Naive thymus-derived CD4-positive, alpha-beta T cell (primary cell): ENCODE measurements at regions of chr12 and their contacts with region 1.

Region 1: GRCh38 chr12:21476949-21477348 is 24.5 kb downstream of the RECQL start:
- DNase-seq: no peak
- ATAC-seq: no peak
- H3K4me3 ChIP-seq: no peak overlapping the region
- H3K4me3 Mint-ChIP-seq: no peak overlapping the region
- H3K27ac ChIP-seq: no peak overlapping the region
- H3K27ac Mint-ChIP-seq: peak overlapping the region in 3 of 9 donors; percentile 39 to 73 (median 46)
- H3K4me1 ChIP-seq: no peaks in the 10 kb centered on the region
- H3K4me1 Mint-ChIP-seq: peaks cover 0 to 15% (median 0%) of the 10 kb centered on the region in 7 donors
- H3K27me3 ChIP-seq: no peaks in the 10 kb centered on the region
- H3K27me3 Mint-ChIP-seq: no peaks in the 10 kb centered on the region

Region 2: DNA sequence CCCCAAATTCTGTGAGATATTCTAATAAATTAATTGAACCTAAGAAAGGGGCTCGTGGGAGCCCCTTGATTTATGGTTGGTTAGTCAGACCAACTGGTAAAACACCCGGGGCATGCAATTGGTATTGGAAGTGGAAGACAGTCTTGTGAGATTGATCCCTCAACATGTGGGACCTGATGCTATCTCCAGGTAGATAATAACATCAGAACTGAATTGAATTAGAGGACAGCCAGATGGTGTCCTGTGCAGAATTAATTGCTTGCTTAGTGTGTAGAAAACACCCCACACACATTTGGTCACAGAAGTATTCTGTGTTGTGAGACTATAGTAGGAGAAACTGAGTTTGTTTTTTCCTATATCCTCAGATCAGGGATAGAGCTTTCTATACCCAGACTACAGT is 17.5 kb before region 1 on chr12:
- CTCF ChIA-PET with region 1: no interaction called
- POLR2A ChIA-PET with region 1: no interaction called
- intact Hi-C with region 1: loop called in 1 of 2 experiments (anchors 1 kb)
- DNase-seq: no peak
- ATAC-seq: no peak
- H3K4me3 ChIP-seq: no peak overlapping the region
- H3K4me3 Mint-ChIP-seq: no peak overlapping the region
- H3K27ac ChIP-seq: no peak overlapping the region
- H3K27ac Mint-ChIP-seq: peak overlapping the region in 2 of 9 donors; percentile 21 to 94
- H3K4me1 ChIP-seq: peaks cover 16 to 38% of the 10 kb centered on the region in 2 donors
- H3K4me1 Mint-ChIP-seq: peaks cover 15 to 46% (median 35%) of the 10 kb centered on the region in 7 donors
- H3K27me3 ChIP-seq: no peaks in the 10 kb centered on the region
- H3K27me3 Mint-ChIP-seq: no peaks in the 10 kb centered on the region

Region 3: DNA sequence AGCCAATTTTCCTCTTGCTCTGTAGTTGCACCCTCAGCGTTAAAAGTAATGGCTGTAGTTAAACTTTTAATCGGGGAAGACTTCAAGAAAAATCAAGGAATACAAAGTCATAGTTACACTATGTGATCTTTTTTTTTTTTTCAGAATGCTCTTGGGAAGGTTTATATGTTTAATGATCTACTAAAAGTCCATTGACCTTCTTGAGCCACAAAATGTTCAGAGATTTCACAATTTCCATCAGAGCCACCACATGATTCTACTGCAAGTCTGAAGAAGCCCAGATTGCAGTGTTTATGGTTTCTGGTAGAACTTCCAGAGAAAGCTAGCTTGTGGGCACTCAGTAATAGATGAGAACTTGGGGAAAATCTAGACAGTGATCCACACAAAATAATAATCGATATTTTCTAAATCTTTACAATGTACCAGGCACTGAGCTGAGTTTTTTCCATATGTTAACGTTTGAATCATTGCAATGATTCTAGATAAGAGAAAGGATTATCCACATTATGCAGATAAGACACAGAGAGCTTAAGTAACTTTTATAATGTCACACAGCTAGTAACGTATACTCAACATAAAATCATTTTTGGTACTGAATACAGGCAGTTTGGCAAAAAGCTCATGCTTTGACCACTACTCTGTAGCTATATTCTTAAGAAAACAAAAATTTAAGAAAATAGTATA is 89.4 kb after region 1 on chr12:
- CTCF ChIA-PET with region 1: no interaction called
- POLR2A ChIA-PET with region 1: no interaction called
- intact Hi-C with region 1: no loop called
- DNase-seq: no peak
- ATAC-seq: no peak
- H3K4me3 ChIP-seq: no peak overlapping the region
- H3K4me3 Mint-ChIP-seq: no peak overlapping the region
- H3K27ac ChIP-seq: no peak overlapping the region
- H3K27ac Mint-ChIP-seq: no peak overlapping the region
- H3K4me1 ChIP-seq: no peaks in the 10 kb centered on the region
- H3K4me1 Mint-ChIP-seq: no peaks in the 10 kb centered on the region
- H3K27me3 ChIP-seq: peaks cover 0 to 3% of the 10 kb centered on the region in 2 donors
- H3K27me3 Mint-ChIP-seq: no peaks in the 10 kb centered on the region